ENCODE measurements at regions of chr20 and their contacts with region 1.

Region 1: GRCh38 chr20:32674362-32674789 is 635 bp upstream of the C20orf203 start:
- DNase-seq: peak; percentile 78 to 83 (median 82)
- ATAC-seq: peak; percentile 77
- H3K4me3 ChIP-seq: no peak overlapping the region
- H3K27ac ChIP-seq: peak overlapping the region; percentile 67
- H3K4me1 ChIP-seq: peaks cover 35 to 43% of the 10 kb centered on the region in 2 experiments
- H3K27me3 ChIP-seq: no peaks in the 10 kb centered on the region
- CTCF ChIP-seq: peak; percentile 83 to 98 (median 91)
- EP300 ChIP-seq: no peak
- POLR2A ChIP-seq: no peak
- RAD21 ChIP-seq: peak; percentile 93 to 98

Region 2: GRCh38 chr20:32877507-32877906 is 203.1 kb after region 1 on chr20:
- CTCF ChIA-PET with region 1: no interaction called
- POLR2A ChIA-PET with region 1: no interaction called
- in situ Hi-C with region 1: no loop called
- intact Hi-C with region 1: no loop called
- DNase-seq: no peak
- ATAC-seq: no peak
- H3K4me3 ChIP-seq: no peak overlapping the region
- H3K27ac ChIP-seq: no peak overlapping the region
- H3K4me1 ChIP-seq: peaks cover 0 to 3% of the 10 kb centered on the region in 2 experiments; a peak in 2 of 5 replicates
- H3K27me3 ChIP-seq: peaks cover 33 to 48% of the 10 kb centered on the region in 2 experiments
- CTCF ChIP-seq: no peak
- EP300 ChIP-seq: no peak
- POLR2A ChIP-seq: no peak
- RAD21 ChIP-seq: no peak

Region 3: GRCh38 chr20:32894026-32894483 is 219.7 kb after region 1 on chr20:
- CTCF ChIA-PET with region 1: no interaction called
- POLR2A ChIA-PET with region 1: no interaction called
- in situ Hi-C with region 1: no loop called
- intact Hi-C with region 1: loop called (anchors 1 kb)
- DNase-seq: peak; percentile 56 to 66 (median 62)
- ATAC-seq: peak; percentile 93
- H3K4me3 ChIP-seq: no peak overlapping the region
- H3K27ac ChIP-seq: no peak overlapping the region
- H3K4me1 ChIP-seq: peaks cover 0 to 7% of the 10 kb centered on the region in 2 experiments; a peak in 2 of 5 replicates
- H3K27me3 ChIP-seq: peaks cover 28 to 62% of the 10 kb centered on the region in 2 experiments
- CTCF ChIP-seq: peak; percentile 79 to 89 (median 82)
- EP300 ChIP-seq: no peak
- POLR2A ChIP-seq: no peak
- RAD21 ChIP-seq: peak; percentile 5 to 76; a peak in 2 of 4 replicates

Region 4: GRCh38 chr20:32945710-32946221 is 271.4 kb after region 1 on chr20:
- CTCF ChIA-PET with region 1: no interaction called
- POLR2A ChIA-PET with region 1: no interaction called
- in situ Hi-C with region 1: no loop called
- intact Hi-C with region 1: loop called (anchors 1 kb)
- DNase-seq: peak in 2 of 4 experiments; percentile 14 to 46
- ATAC-seq: peak; percentile 84
- H3K4me3 ChIP-seq: no peak overlapping the region
- H3K27ac ChIP-seq: no peak overlapping the region
- H3K4me1 ChIP-seq: no peaks in the 10 kb centered on the region
- H3K27me3 ChIP-seq: peaks cover 0 to 11% of the 10 kb centered on the region in 2 experiments; a peak in 2 of 5 replicates
- CTCF ChIP-seq: peak; percentile 53 to 57 (median 57); a peak in 5 of 6 replicates
- EP300 ChIP-seq: no peak
- POLR2A ChIP-seq: no peak
- RAD21 ChIP-seq: peak in 1 of 2 experiments; percentile 56; a peak in 2 of 4 replicates